Panc1 (cell line): ENCODE measurements at regions of chr15 and their contacts with region 1.

Region 1: DNA sequence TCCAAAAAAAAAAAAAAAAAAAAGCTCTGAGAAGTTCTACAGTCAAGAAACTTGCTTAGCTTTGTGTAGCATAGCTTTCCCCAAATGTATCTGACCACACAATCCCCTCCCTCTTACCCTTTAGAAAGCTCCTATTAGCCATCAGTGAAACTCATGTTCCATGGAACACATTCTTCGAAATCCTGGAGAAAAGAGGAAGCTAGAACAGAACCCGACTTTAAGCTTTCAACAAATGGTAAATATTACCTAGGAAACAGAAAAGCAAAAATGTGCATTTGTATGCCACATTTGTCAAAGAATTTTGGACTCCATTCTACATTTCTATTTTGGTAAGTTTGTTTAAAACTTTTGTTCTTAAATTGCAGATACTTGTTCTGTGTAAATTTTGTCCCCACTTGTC is 17.4 kb upstream of the CRTC3 start:
- DNase-seq: no peak
- ATAC-seq: no peak
- H3K4me3 ChIP-seq: no peak overlapping the region
- H3K27ac ChIP-seq: no peak overlapping the region
- H3K4me1 ChIP-seq: no peaks in the 10 kb centered on the region
- H3K27me3 ChIP-seq: no peaks in the 10 kb centered on the region
- CTCF ChIP-seq: no peak

Region 2: DNA sequence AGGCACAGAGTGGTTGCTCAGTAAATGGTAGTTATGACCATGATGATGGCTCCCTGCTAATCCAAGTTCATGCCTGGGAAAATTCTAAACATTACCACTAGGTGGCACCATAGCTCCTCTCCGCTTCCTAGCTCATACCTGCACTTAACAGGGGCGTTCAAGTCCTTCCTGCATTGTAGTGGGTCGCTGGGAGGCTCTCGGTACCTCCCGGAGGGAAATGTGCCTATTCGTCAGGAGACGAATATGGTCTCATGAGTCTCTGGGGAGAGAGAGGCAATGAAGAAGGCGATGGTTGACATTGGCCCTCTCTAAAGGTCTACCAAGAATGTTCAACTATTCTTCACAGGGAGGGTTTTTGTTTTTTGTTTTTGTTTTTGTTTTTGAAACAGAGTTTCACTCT is 772.1 kb before region 1 on chr15:
- CTCF ChIA-PET with region 1: no interaction called
- POLR2A ChIA-PET with region 1: no interaction called
- in situ Hi-C with region 1: no loop called
- intact Hi-C with region 1: no loop called
- DNase-seq: peak; percentile 72
- ATAC-seq: peak; percentile 96
- H3K4me3 ChIP-seq: no peak overlapping the region; a peak in 1 of 4 replicates
- H3K27ac ChIP-seq: no peak overlapping the region
- H3K4me1 ChIP-seq: no peaks in the 10 kb centered on the region
- H3K27me3 ChIP-seq: no peaks in the 10 kb centered on the region
- CTCF ChIP-seq: peak; percentile 94

Region 3: GRCh38 chr15:90413411-90414379 is 98.6 kb before region 1 on chr15:
- CTCF ChIA-PET with region 1: interaction called, 16 read pairs
- POLR2A ChIA-PET with region 1: no interaction called
- in situ Hi-C with region 1: no loop called
- intact Hi-C with region 1: no loop called
- DNase-seq: no peak
- ATAC-seq: peak; percentile 40
- H3K4me3 ChIP-seq: peak overlapping the region in 1 of 2 experiments; percentile 17; a peak in 2 of 4 replicates
- H3K27ac ChIP-seq: peak overlapping the region; percentile 88
- H3K4me1 ChIP-seq: peaks cover 44% of the 10 kb centered on the region
- H3K27me3 ChIP-seq: no peaks in the 10 kb centered on the region
- CTCF ChIP-seq: no peak

Region 4: GRCh38 chr15:90497912-90498311 is 14.4 kb before region 1 on chr15:
- CTCF ChIA-PET with region 1: no interaction called
- POLR2A ChIA-PET with region 1: no interaction called
- in situ Hi-C with region 1: no loop called
- intact Hi-C with region 1: no loop called
- DNase-seq: no peak
- ATAC-seq: no peak
- H3K4me3 ChIP-seq: no peak overlapping the region
- H3K27ac ChIP-seq: no peak overlapping the region
- H3K4me1 ChIP-seq: no peaks in the 10 kb centered on the region
- H3K27me3 ChIP-seq: no peaks in the 10 kb centered on the region
- CTCF ChIP-seq: no peak

Region 5: GRCh38 chr15:90523373-90523772 is 11.1 kb after region 1 on chr15:
- CTCF ChIA-PET with region 1: no interaction called
- POLR2A ChIA-PET with region 1: no interaction called
- in situ Hi-C with region 1: no loop called
- intact Hi-C with region 1: no loop called
- DNase-seq: no peak
- ATAC-seq: no peak
- H3K4me3 ChIP-seq: no peak overlapping the region
- H3K27ac ChIP-seq: no peak overlapping the region
- H3K4me1 ChIP-seq: no peaks in the 10 kb centered on the region
- H3K27me3 ChIP-seq: no peaks in the 10 kb centered on the region
- CTCF ChIP-seq: no peak

Region 6: GRCh38 chr15:90553248-90553745 is 41.0 kb after region 1 on chr15:
- CTCF ChIA-PET with region 1: no interaction called
- POLR2A ChIA-PET with region 1: no interaction called
- in situ Hi-C with region 1: no loop called
- intact Hi-C with region 1: no loop called
- DNase-seq: no peak
- ATAC-seq: no peak
- H3K4me3 ChIP-seq: no peak overlapping the region
- H3K27ac ChIP-seq: no peak overlapping the region
- H3K4me1 ChIP-seq: no peaks in the 10 kb centered on the region
- H3K27me3 ChIP-seq: no peaks in the 10 kb centered on the region
- CTCF ChIP-seq: no peak

Region 7: DNA sequence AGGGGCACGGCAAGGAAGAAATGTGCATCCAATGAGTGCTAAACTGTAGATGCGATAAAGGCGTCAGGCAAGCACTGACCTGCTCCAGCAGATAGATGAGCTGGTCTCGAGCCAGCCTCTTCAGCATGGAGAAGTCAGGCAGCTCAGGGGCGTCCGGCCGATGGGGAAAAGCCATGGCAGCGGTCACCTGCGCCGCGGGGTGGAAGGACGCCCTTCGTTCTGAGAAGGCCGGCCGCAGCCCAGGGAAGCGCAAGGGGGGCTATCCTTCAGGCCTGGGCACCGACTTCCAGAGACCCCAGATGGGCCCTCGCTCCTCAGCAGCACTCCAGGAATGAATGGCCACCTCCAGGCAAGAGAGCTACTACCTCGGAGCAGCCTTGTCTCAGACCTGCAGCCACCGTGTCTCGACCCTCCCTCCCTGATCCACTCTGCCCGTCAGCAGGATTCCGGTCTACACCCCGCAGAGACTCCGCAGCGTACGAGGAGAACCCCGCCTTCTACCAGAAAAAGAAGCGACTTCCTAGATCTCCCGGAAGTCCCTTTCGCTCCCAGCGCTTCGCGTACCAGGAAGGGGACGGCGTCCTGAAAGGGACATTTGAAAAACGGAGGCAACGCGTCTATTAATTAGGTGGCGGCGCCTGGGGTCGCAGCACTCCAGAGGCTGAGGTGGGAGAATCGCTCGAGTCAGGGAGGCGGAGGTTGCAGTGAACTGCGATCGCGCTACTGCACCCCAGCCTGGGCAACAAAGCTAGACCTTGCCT is 510.0 kb after region 1 on chr15 and contains the start of gene VPS33B:
- CTCF ChIA-PET with region 1: no interaction called
- POLR2A ChIA-PET with region 1: interaction called, 11 read pairs
- in situ Hi-C with region 1: no loop called
- intact Hi-C with region 1: no loop called
- DNase-seq: peak; percentile 52
- ATAC-seq: peak; percentile 97
- H3K4me3 ChIP-seq: peak within 1 kb of the TSS; percentile 84 to 95
- H3K27ac ChIP-seq: peak within 1 kb of the TSS; percentile 93
- H3K4me1 ChIP-seq: peaks cover 6% of the 10 kb centered on the region; the same call in 1 of the 2 replicates
- H3K27me3 ChIP-seq: no peaks in the 10 kb centered on the region
- CTCF ChIP-seq: no peak
- total RNA-seq, gene VPS33B: 16.3 TPM